ENCODE measurements at regions of chr19 and their contacts with region 1.

Region 1: DNA sequence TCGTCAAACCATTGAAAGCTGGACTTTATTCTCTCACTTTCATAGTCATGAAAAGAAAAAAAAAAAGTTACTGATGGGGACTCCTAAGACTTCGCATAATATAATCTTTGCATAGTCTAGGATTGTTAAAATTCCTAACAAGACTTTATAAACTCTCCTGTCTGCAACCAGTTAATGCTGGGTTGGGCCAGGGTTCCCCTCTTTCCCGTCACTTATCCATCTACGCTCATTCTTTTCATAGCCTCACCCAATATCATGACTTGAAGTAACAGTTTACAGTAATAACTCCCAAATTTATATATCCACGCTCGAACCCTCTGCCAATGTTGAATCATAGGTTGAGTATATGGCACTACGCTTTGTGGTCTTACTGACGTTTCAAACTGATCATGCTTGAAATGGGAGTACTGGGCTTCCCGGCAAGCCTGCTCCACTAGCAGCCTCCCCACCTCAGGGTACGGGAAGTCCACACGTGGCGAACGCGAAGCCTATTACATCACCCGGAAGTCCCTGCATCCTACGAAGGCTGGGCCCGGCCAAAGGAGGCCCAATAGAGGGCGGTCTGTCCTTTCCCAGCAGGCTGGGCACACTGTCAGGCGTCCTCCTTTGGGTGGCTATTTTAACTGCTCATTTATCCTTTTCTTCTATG is 743 bp upstream of the ZNF460 start:
- DNase-seq: peak; percentile 81 to 96
- H3K4me3 ChIP-seq: peak overlapping the region; percentile 93 to 98
- H3K27ac ChIP-seq: peak overlapping the region; percentile 99 to 100
- H3K4me1 ChIP-seq: peaks cover 11 to 12% of the 10 kb centered on the region in 2 donors
- H3K27me3 ChIP-seq: no peaks in the 10 kb centered on the region
- CTCF ChIP-seq: peak in 2 of 3 experiments; percentile 8 to 43

Region 2: DNA sequence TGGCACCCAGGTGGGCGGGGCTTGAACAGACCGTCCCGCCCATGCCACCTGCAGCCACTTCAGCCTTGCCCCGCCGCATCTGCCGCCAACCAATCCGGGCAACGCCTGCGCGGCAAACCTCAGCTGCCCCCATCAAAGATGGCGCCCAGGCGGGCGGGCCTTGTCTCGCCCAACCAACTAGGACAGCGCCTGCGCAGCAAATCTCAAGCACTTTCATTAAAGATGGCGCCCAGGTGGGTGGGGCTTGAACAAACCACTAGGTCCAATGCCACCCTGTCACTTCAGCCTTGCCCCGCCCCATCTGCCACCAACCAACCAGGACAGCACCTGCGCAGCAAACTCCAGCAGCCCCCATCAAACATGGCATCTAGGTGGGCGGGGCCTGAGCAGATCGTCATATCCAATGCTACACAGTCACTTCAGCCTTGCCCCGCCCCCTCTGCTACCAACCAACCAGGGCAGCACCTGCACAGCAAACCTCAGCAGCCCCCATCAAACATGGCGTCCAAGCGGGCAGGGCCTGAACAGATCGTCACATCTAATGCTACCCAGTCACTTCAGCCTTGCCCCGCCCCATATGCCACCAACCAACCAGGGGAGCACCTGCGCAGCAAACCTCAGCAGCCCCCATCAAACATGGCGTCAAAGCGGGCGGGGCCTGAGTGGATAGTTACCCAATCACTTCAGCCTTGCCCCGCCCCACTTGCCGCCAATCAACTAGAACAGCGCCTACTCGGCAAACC is 440.5 kb before region 1 on chr19:
- intact Hi-C with region 1: loop called (anchors 10 kb)
- DNase-seq: peak; percentile 94 to 98
- H3K4me3 ChIP-seq: peak overlapping the region; percentile 57 to 70
- H3K27ac ChIP-seq: peak overlapping the region; percentile 86 to 95
- H3K4me1 ChIP-seq: no peaks in the 10 kb centered on the region
- H3K27me3 ChIP-seq: no peaks in the 10 kb centered on the region
- CTCF ChIP-seq: no peak

Region 3: GRCh38 chr19:57118848-57119247 is 160.7 kb before region 1 on chr19:
- intact Hi-C with region 1: no loop called
- DNase-seq: no peak
- H3K4me3 ChIP-seq: no peak overlapping the region
- H3K27ac ChIP-seq: no peak overlapping the region
- H3K4me1 ChIP-seq: no peaks in the 10 kb centered on the region
- H3K27me3 ChIP-seq: no peaks in the 10 kb centered on the region
- CTCF ChIP-seq: no peak

Region 4: DNA sequence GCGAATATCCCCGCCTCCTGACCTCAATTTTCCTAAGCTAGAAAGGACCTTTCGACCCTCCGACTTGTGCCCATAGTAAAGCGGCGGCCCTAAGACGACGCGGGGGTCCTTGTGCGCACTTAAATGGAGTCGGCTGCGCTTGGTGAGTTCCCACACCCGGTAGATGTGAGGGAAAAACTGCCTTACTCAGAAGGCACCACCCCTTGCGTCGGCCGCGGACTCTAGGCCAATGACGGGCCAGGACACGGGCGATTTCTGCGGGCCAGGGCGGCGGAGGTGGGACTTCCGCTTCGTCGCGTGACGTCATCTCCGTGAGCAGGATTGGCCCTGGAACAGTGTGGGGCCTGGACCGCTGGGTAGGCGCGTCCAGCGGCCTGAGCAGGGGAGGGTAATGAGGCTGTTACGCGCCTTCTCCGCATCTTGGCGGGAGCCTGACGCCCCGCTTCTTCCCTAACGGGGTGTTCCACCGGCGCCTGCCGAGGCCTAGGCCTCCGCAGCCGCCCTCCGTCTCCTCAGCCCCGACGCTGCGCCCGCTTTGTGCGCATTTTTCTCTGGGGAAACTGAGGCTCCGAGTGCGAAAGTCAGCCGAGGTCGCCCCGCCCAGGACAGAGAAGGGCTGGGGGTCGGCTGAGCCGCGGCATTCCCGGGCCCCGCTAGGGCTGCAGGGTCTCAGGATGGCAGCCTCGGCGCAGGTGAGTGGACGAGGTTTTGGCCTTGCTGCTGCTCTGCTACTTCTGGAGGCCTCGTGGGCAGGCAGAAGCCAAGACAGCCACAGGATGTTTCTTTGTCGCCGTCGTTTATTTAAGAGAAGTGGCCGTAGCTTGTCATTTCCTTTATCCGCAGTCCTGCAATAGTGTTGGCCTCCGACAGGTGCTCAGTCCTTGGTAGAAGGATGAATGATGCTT is 40.9 kb after region 1 on chr19 and contains the start of gene ZNF543:
- intact Hi-C with region 1: loop called (anchors 2 kb)
- DNase-seq: peak; percentile 82 to 95
- H3K4me3 ChIP-seq: peak within 1 kb of the TSS; percentile 65 to 69
- H3K27ac ChIP-seq: peak within 1 kb of the TSS; percentile 82 to 87
- H3K4me1 ChIP-seq: peaks cover 0 to 6% of the 10 kb centered on the region in 2 donors
- H3K27me3 ChIP-seq: no peaks in the 10 kb centered on the region
- CTCF ChIP-seq: no peak
- total RNA-seq, gene ZNF543: 4.5 TPM

Region 5: GRCh38 chr19:57362997-57363705 is 83.6 kb after region 1 on chr19 and contains the starts of genes TRAPPC2B and ZNF547:
- intact Hi-C with region 1: loop called (anchors 1 kb)
- DNase-seq: peak; percentile 99 to 100
- H3K4me3 ChIP-seq: peak within 1 kb of the TSS; percentile 79 to 87
- H3K27ac ChIP-seq: peak within 1 kb of the TSS; percentile 95
- H3K4me1 ChIP-seq: no peaks in the 10 kb centered on the region
- H3K27me3 ChIP-seq: no peaks in the 10 kb centered on the region
- CTCF ChIP-seq: no peak
- total RNA-seq, gene TRAPPC2B: 1.8 TPM
- total RNA-seq, gene ZNF547: not detected

Region 6: DNA sequence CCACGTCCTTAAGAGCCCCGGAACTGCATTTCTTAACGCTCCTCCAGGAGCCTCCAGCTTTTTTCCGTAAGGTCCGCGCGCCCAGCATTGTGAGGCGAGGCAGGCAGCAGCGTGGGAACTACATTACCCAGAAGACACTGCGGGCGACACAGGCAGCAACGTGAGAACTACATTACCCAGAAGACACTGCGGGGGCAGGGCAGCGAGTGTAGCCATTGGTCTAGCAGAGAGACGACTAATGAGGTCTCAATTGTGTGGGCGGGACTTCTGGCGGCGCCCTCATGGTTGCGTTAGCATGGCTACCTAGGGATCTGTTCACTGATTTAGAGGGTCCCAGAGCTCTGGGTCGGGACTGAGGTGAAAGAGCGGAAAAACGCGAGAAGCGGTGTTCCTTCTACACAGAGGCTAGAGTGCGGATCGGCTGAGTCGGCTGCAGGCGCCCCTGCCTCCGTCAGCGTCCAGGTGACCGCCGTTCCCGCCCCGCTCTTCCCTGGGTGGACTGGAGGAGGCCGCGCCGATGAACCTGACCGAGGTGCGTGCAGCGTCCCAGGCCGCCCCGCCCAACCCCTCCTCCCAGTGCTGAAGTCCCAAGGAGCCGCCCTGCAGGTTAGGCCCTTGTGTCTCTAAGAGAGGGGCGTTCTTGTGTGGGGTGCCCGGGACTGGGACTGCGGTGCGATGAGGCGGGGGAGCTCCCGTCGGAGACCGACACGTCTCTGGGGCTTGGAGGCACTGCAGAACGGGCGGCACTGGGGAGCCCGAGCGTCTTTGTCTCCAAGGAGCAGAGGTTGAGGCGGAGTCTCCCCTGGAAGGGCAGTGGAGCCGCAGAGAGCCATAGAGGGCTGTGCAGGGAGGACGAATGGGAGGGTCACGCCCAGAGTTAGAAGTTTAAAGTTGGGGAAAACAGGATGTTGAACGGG is 155.8 kb after region 1 on chr19 and contains the start of gene ZNF749:
- intact Hi-C with region 1: loop called (anchors 2 kb)
- DNase-seq: peak; percentile 98 to 99
- H3K4me3 ChIP-seq: peak within 1 kb of the TSS; percentile 84 to 85
- H3K27ac ChIP-seq: no peak within 1 kb of the TSS
- H3K4me1 ChIP-seq: peaks cover 5 to 9% of the 10 kb centered on the region in 2 donors
- H3K27me3 ChIP-seq: no peaks in the 10 kb centered on the region
- CTCF ChIP-seq: no peak
- total RNA-seq, gene ZNF749: 2.7 TPM